Stomach (tissue), 19 donors: ENCODE measurements at regions of chr3 and their contacts with region 1.

Region 1: DNA sequence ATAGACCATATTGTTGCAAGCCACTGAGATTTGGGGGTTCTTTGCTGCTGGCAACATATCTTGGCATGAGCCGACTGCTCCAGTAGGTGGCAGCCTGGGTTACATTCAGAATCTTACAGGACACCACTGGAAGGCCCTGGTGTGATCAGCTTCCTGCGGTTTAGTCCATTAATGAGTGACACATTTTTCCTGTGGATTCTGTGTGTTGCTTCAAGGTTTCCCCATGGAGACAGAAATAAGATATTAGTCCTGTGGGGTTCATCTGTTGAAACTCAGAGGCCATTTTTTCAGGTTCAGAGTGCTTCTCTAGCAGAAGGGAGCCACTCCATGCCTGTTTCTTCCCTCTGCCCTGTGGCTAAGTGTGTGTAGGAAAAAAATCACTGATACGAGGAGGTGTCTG is 116.2 kb downstream of the MFSD1 start:
- DNase-seq: peak; percentile 46 to 75
- H3K4me3 ChIP-seq: no peak overlapping the region
- H3K27ac ChIP-seq: no peak overlapping the region
- H3K4me1 ChIP-seq: no peaks in the 10 kb centered on the region
- H3K27me3 ChIP-seq: no peaks in the 10 kb centered on the region
- CTCF ChIP-seq: peak in 5 of 7 experiments; percentile 28 to 42 (median 39)
- EP300 ChIP-seq: no peak
- POLR2A ChIP-seq: no peak

Region 2: DNA sequence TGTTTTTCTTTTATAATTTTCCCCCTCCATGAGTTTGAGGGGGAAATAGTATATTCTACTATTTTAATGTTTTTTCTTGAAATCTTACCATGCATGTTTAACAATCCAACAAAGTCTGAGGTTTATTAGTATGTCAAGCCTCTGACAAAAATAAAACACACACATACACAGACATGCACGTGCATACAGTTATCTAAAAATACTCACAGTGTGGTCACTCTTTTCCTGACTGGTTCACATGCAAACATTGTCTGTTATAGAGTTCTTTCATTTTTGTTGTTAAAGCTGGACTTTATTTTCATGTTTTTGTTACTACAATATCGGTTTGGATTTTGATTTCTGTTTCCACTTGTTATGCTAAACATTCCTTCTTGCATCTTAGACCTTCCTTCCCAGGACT is 120.4 kb after region 1 on chr3:
- intact Hi-C with region 1: no loop called
- DNase-seq: no peak
- H3K4me3 ChIP-seq: no peak overlapping the region
- H3K27ac ChIP-seq: no peak overlapping the region
- H3K4me1 ChIP-seq: no peaks in the 10 kb centered on the region
- H3K27me3 ChIP-seq: no peaks in the 10 kb centered on the region
- CTCF ChIP-seq: no peak
- EP300 ChIP-seq: no peak
- POLR2A ChIP-seq: no peak

Region 3: DNA sequence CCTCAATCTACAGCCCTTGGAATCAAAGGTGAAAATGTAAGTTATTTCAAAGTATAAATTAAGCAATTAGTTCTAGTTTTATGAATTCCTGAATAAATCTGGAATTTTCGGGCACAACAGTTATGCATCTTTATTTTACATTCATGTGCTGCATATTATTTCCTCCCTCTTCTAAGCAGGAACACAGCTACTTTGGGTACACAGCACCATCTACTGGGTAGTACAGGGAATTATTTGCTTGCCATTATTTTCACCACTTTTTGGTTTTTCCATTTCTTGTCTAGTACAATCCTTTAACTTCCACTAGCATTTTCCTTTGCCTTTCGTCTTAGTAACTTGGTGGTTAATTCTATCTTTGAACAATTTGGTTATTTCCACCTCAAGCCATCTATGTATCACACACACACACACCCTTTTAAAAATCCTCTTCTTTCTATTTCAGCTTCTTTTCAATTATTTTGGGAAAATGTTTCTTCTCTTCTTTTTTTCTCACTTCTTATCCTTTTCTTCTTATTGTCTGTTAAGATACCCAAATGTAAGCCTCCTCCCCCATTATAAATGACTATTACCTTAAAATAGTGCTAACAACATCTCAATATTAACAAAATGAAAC is 334.9 kb after region 1 on chr3:
- intact Hi-C with region 1: loop called (anchors 10 kb)
- DNase-seq: peak in 1 of 2 donors; percentile 50
- H3K4me3 ChIP-seq: no peak overlapping the region
- H3K27ac ChIP-seq: no peak overlapping the region
- H3K4me1 ChIP-seq: no peaks in the 10 kb centered on the region
- H3K27me3 ChIP-seq: peaks cover 0 to 8% (median 0%) of the 10 kb centered on the region in 3 donors
- CTCF ChIP-seq: peak in 4 of 7 experiments; percentile 18 to 78 (median 46)
- EP300 ChIP-seq: no peak
- POLR2A ChIP-seq: no peak